ENCODE measurements at regions of chr2 and their contacts with region 1.

Region 1: GRCh38 chr2:9799665-9800632 is 43.3 kb upstream of the TAF1B start:
- DNase-seq: peak; percentile 83

Region 2: GRCh38 chr2:10043906-10044601 is 244.1 kb after region 1 on chr2:
- in situ Hi-C with region 1: loop called (anchors 25 kb)
- DNase-seq: peak; percentile 96